ENCODE measurements at regions of chr17 and their contacts with region 1.

Region 1: GRCh38 chr17:77779711-77780539 is 178.6 kb upstream of the TNRC6C start:
- DNase-seq: no peak
- ATAC-seq: no peak
- H3K4me3 ChIP-seq: no peak overlapping the region
- H3K4me3 Mint-ChIP-seq: no peak overlapping the region
- H3K27ac ChIP-seq: no peak overlapping the region
- H3K27ac Mint-ChIP-seq: no peak overlapping the region
- H3K4me1 ChIP-seq: peaks cover 29% of the 10 kb centered on the region
- H3K4me1 Mint-ChIP-seq: peaks cover 18 to 20% of the 10 kb centered on the region in 2 donors
- H3K27me3 ChIP-seq: no peaks in the 10 kb centered on the region
- H3K27me3 Mint-ChIP-seq: no peaks in the 10 kb centered on the region
- CTCF ChIP-seq: no peak

Region 2: DNA sequence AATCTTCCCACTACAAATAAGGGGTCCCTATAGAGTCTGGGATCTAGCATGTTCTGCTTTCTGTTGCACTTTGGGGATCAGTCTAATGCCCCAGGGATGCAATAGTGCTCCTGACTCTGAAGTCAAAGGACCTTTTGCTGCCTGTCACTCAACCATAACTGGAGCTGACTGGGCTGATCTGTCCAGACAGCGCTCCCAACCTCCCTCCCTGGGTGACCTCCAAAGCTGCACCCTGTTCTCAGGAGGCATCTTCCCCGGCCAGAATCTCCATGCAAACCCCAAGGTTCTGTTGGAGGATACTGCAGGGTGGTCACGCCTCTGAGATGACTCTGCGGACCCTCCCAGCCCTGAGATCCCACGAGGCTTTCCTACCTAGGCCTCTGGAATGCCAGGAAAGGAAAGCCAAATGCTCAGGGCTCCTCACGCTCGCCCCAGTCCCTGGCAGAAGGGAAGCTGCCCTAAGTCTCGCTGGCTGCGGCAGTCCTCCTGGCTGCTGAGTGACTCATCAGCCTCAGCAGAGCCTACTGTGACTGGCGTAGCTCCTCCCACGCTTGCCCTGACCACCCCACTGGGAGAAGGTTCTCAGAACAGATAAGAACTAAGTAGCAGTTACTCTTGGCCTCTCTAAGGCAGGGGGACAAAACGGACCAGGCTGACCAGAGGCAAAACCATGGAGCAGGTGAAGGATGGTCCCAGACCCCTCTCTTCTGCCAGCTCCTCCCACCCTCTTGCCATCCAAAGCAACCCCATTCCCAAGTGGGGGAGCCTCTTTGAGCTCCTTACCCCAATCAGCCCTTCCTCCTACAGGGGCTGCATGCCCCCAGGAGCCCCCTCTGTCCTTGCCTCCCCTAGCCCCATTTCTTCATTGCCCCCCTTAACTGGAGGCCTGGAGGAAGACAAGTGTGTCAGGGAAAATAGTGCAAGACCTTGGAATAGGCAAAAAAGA is 54.5 kb after region 1 on chr17:
- intact Hi-C with region 1: loop called (anchors 1 kb)
- DNase-seq: peak; percentile 72 to 74
- ATAC-seq: peak; percentile 75 to 86 (median 85)
- H3K4me3 ChIP-seq: no peak overlapping the region
- H3K4me3 Mint-ChIP-seq: peak overlapping the region; percentile 45
- H3K27ac ChIP-seq: no peak overlapping the region
- H3K27ac Mint-ChIP-seq: peak overlapping the region; percentile 7 to 88
- H3K4me1 ChIP-seq: peaks cover 54% of the 10 kb centered on the region
- H3K4me1 Mint-ChIP-seq: peaks cover 41 to 43% of the 10 kb centered on the region in 2 donors
- H3K27me3 ChIP-seq: no peaks in the 10 kb centered on the region
- H3K27me3 Mint-ChIP-seq: peaks cover 12 to 19% of the 10 kb centered on the region in 2 donors
- CTCF ChIP-seq: no peak

Region 3: DNA sequence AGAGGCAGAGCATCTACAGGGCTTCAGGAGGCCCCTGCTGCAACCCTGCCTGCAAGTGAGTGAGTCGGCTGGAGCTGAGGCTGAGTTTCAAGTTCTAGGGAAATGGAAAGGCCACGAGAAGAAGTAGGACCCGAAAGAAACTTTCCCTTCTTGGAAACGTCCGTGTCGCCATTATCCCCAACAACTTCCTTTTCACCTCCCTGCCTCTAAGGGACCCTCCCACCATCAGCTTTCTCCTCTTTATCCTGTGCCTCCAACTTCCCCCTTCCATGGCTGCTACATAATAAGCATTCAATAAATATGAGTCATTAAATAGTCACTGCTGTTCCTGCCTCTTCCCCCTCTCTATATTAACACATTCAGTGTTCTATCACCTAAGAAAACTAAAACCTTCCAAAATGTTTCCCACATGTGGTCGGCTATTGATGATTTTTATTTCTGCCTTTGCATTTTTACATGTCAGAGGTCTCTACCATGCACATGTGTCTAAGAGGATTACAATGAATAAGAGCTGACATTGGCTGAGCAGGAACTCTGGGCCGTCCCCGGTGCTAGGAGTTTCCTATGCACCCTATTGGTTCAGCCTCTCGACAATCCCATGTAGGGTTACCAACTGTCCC is 62.7 kb after region 1 on chr17:
- intact Hi-C with region 1: loop called (anchors 2 kb)
- DNase-seq: no peak
- ATAC-seq: no peak
- H3K4me3 ChIP-seq: no peak overlapping the region
- H3K4me3 Mint-ChIP-seq: no peak overlapping the region
- H3K27ac ChIP-seq: no peak overlapping the region
- H3K27ac Mint-ChIP-seq: peak overlapping the region; percentile 84 to 96
- H3K4me1 ChIP-seq: peaks cover 70% of the 10 kb centered on the region
- H3K4me1 Mint-ChIP-seq: peaks cover 69 to 73% of the 10 kb centered on the region in 2 donors
- H3K27me3 ChIP-seq: no peaks in the 10 kb centered on the region
- H3K27me3 Mint-ChIP-seq: peaks cover 0 to 8% of the 10 kb centered on the region in 2 donors
- CTCF ChIP-seq: no peak

Region 4: DNA sequence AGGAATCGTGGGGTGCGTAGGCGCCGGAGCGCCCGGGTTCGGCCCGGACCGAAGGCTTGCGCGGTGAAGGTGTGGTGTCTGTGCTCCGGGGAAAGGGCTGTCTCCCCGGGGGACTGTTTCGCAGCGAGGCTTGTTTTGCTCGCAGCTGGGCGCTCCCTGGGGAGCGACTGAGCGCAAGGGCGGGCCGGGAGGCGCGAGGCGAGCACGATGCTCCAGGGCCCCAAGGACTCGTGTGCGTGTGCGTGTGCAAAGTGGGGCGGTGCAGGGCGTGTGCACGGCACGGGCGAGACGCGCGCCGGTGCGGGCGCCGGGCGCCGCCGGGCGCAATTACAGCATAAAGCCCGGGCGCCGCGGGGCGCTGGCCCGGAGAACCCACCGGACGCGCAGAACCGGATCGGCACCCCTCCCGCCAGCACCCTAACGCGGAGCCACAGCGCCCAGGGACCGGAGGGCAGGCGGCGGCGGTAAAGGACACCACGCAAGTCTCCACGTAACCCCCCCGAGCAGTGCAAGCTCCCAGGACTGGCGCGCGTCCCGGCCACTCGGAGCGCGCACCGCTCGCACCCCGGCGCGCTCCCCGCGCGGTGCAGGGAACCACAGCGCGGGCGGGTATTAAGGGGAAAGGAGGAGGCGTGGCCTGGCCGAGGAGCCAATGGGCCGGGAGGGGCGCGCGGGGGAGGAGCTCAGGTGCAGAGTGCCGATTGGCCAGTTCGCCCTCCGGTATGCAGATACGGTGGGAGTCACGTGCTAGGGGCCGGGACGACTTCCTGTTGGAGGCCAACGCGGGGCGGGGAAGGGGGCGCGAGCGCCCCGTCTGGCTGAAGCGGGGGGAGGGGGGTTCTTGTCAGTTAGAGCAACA is 178.2 kb after region 1 on chr17 and contains the start of gene TNRC6C:
- intact Hi-C with region 1: loop called (anchors 5 kb)
- DNase-seq: peak; percentile 99
- ATAC-seq: peak; percentile 88 to 97 (median 92)
- H3K4me3 ChIP-seq: peak within 1 kb of the TSS; percentile 83
- H3K4me3 Mint-ChIP-seq: peak within 1 kb of the TSS; percentile 95
- H3K27ac ChIP-seq: peak within 1 kb of the TSS; percentile 72
- H3K27ac Mint-ChIP-seq: peak within 1 kb of the TSS; percentile 88 to 93
- H3K4me1 ChIP-seq: peaks cover 21% of the 10 kb centered on the region
- H3K4me1 Mint-ChIP-seq: peaks cover 43 to 45% of the 10 kb centered on the region in 2 donors
- H3K27me3 ChIP-seq: no peaks in the 10 kb centered on the region
- H3K27me3 Mint-ChIP-seq: peaks cover 5 to 11% of the 10 kb centered on the region in 2 donors
- CTCF ChIP-seq: no peak
- total RNA-seq, gene TNRC6C: 74.3 to 100 (median 76.3) TPM

Measured in natural killer cell (primary cell).